Calu3 (cell line): ENCODE measurements at regions of chr5 and their contacts with region 1.

Region 1: DNA sequence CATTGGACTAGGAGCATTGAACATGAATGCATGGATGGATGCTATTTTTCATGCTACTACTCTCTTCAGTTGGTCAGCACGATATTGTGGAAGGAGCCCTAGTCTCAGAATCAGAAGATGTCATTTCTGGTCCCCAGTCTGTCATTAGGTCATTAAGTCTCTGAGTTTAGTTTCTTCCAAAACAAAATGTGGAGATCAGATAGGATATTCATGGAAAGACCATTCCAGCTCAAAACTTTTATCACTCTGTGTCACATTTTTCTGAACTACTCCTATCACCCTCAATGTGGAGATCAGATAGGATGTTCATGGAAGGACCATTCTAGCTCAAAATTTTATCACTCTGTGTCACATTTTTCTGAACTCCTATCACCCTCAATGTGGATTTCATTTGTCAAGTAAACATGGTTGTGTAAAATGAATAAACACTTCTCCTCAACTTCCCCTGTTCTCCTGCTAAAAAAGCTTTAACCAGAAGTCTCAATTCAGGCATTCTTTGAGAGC is 296.8 kb downstream of the MRPS30 start:
- DNase-seq: no peak
- H3K4me3 Mint-ChIP-seq: no peak overlapping the region
- H3K27ac Mint-ChIP-seq: no peak overlapping the region
- H3K4me1 Mint-ChIP-seq: no peaks in the 10 kb centered on the region
- H3K27me3 Mint-ChIP-seq: peaks cover 9% of the 10 kb centered on the region
- CTCF ChIP-seq: no peak

Region 2: DNA sequence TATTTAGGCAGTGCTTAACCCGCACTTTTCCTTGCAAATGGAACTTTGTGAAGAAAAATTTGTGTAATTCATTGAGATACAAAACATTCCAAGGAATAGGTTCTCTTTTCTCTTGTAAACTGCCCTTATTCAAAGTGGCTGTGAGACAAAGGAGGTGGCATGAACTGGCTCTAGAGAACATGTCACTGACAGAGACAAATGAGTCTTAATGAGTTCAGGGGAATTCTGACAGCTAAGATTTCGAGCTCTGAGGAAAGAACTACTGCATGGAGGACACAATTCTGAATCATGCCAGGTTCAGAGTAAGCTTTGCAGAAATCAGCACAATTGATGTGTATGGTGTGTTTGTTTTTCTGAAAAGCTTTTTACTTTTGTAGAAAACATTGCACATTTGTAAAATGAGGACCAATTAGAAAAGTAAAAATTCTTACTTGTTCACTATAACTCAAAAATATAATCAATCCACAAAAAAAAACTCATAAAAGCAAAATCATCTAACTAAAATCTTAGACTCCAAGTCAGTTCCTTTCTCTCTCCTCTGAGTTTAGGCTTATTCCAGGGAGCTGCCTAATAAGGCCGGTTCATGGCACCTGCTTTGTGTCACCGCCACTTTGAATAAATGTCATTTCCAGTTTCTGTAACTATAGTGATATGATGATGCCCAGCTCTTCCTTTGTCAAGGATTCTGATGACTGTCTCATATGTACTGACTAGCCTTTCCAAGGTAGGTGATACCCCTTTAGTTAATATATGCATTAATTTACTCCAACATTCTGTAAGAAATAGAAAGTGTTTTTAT is 427.5 kb after region 1 on chr5:
- CTCF ChIA-PET with region 1: interaction called, 10 read pairs
- intact Hi-C with region 1: no loop called
- DNase-seq: no peak
- H3K4me3 Mint-ChIP-seq: no peak overlapping the region
- H3K27ac Mint-ChIP-seq: no peak overlapping the region
- H3K4me1 Mint-ChIP-seq: no peaks in the 10 kb centered on the region
- H3K27me3 Mint-ChIP-seq: no peaks in the 10 kb centered on the region
- CTCF ChIP-seq: no peak